ENCODE measurements at regions of chr14 and their contacts with region 1.

Region 1: DNA sequence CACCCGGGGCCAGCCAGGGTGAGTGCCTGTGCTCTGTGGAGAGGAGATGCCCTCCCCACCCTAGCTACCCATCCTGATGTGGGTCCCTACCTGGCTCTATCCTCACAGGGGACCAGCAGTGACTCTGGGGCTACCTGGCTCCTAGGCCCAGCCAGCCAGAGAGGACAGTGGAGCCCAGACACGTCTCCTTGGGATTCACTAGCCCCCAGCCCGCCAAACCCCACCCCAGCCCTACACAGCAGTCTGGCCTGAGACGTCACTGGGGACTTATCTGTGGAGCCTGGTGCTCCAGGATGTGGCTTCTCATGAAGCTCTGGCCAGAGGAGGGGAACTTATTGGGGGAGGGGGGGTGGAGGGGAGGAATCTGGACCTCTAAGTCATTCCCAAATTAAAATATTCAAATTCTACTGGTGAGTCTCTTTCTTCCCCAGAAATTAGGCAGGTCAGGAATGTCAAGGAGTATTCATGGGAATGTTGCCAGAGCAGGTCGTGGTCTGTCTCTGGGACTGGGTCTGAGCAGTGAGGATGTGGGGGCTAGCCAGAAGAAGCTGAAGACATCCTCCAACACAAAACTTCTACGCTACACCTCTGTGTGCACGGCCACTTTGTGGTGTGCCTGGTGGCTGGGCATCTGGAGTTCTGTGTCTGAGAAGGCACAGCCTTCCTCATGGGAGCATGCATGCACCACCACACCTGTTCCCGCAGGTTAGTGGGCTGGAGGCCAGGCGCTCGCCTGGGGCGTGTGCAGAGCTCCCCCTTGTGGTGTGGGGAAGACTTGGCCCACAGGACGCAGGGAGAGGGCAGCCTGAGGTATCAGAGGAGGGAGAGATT is 2.7 kb downstream of the CMTM5 start:
- DNase-seq: peak in 1 of 2 experiments; percentile 81
- H3K4me3 ChIP-seq: no peak overlapping the region
- H3K27ac ChIP-seq: no peak overlapping the region
- H3K4me1 ChIP-seq: peaks cover 0 to 12% (median 4%) of the 10 kb centered on the region in 4 experiments; a peak in 3 of 7 replicates
- H3K27me3 ChIP-seq: peaks cover 0 to 23% (median 11%) of the 10 kb centered on the region in 4 experiments; a peak in 6 of 7 replicates
- CTCF ChIP-seq: peak; percentile 92 to 97 (median 95)
- EP300 ChIP-seq: no peak
- POLR2A ChIP-seq: no peak
- RAD21 ChIP-seq: peak; percentile 95

Region 2: DNA sequence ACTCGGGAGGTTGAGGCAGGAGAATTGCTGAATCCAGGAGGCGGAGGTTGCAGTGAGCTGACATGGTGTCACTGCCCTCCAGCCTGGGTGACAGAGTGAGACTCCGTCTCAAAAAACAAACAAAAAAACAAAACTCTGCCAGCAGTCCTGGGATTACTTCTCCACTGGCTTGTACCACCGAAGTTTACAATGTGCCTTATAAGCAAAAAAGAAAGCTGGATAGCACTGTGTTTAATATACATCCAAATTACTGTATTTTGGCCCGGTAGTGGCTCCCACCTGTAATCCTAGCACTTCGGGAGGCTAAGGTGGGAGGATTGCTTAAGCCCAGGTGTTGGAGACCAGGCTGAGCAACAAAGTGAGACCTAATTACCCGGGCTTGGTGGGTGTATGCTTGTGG is 110.4 kb before region 1 on chr14:
- CTCF ChIA-PET with region 1: interaction called, 12 read pairs
- POLR2A ChIA-PET with region 1: no interaction called
- DNase-seq: no peak
- H3K4me3 ChIP-seq: no peak overlapping the region
- H3K27ac ChIP-seq: no peak overlapping the region
- H3K4me1 ChIP-seq: no peaks in the 10 kb centered on the region
- H3K27me3 ChIP-seq: peaks cover 1 to 21% (median 4%) of the 10 kb centered on the region in 4 experiments; a peak in 4 of 7 replicates
- CTCF ChIP-seq: no peak
- EP300 ChIP-seq: no peak
- POLR2A ChIP-seq: no peak
- RAD21 ChIP-seq: no peak

Region 3: DNA sequence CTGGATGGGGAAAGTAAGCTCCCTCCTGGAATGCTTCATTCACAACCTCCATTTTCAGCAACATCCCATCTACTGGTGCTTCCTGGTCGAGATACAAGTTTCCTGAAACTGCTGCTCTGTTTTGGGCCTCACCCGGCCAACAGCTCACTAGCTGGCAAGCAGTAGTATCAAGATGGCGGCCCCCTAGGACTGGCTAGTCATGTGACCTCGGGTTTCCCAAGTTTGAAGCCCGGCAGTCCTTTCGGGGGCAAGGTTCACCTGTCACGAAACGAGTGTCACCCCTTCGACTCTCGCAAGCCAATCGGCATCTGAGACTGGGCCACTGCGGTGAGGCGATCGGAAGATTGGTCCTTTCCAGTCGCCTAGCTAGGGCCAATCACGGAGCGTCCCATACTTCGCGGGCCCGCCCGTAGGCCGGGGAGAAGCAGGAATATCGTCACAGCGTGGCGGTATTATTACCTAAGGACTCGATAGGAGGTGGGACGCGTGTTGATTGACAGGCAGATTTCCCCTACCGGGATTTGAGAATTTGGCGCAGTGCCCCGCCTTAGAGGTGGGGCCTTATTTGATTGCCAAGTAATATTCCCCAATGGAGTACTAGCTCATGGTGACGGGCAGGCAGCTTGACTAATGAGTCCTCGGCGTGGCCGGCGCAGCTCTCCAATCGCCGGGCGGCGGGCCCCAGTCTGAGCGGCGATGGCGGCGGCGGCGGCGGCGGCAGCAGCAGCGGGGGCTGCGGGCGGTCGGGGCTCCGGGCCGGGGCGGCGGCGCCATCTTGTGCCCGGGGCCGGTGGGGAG is 58.6 kb before region 1 on chr14 and contains the start of gene PABPN1:
- CTCF ChIA-PET with region 1: interaction called, 60 read pairs
- POLR2A ChIA-PET with region 1: interaction called, 19 read pairs
- DNase-seq: peak; percentile 94 to 99
- H3K4me3 ChIP-seq: peak within 1 kb of the TSS; percentile 96 to 100 (median 99)
- H3K27ac ChIP-seq: peak within 1 kb of the TSS; percentile 92
- H3K4me1 ChIP-seq: peaks cover 0 to 6% (median 2%) of the 10 kb centered on the region in 4 experiments; a peak in 6 of 7 replicates
- H3K27me3 ChIP-seq: no peaks in the 10 kb centered on the region
- CTCF ChIP-seq: no peak
- EP300 ChIP-seq: no peak
- POLR2A ChIP-seq: peak; percentile 81 to 94
- RAD21 ChIP-seq: no peak
- total RNA-seq, gene PABPN1: 300 and 312 TPM in 2 replicates

Region 4: DNA sequence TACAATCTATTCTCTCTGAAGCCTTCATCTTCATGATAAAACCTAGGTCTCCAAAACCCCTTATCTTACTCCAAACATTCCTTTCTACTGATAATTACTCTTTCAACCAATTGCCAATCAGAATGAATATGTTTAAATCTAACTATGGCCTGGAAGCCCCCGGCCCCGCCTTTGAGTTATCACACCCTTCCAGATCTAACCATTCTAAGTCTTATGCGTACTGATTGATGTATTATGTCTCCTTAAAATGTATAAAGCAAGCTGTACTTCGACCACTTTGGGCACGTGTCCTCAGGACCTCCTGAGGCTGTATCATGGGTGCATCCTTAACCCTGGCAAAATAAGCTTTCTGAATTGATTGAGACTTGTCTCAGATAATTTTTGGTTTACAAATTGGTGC is 44.0 kb before region 1 on chr14:
- CTCF ChIA-PET with region 1: interaction called, 21 read pairs
- POLR2A ChIA-PET with region 1: no interaction called
- DNase-seq: no peak
- H3K4me3 ChIP-seq: no peak overlapping the region
- H3K27ac ChIP-seq: no peak overlapping the region
- H3K4me1 ChIP-seq: no peaks in the 10 kb centered on the region
- H3K27me3 ChIP-seq: no peaks in the 10 kb centered on the region
- CTCF ChIP-seq: no peak
- EP300 ChIP-seq: no peak
- POLR2A ChIP-seq: no peak
- RAD21 ChIP-seq: no peak

Region 5: GRCh38 chr14:23352511-23353432 is 26.8 kb before region 1 on chr14 and contains the start of gene SLC22A17:
- CTCF ChIA-PET with region 1: interaction called, 333 read pairs
- POLR2A ChIA-PET with region 1: interaction called, 7 read pairs
- DNase-seq: peak in 1 of 2 experiments; percentile 86
- H3K4me3 ChIP-seq: peak within 1 kb of the TSS; percentile 37 to 84 (median 73)
- H3K27ac ChIP-seq: 0 out of 2 replicates have a peak within 1 kb of the TSS, but pooled peaks have one; percentile 8
- H3K4me1 ChIP-seq: peaks cover 0 to 3% (median 2%) of the 10 kb centered on the region in 4 experiments; a peak in 4 of 7 replicates
- H3K27me3 ChIP-seq: peaks cover 0 to 14% (median 10%) of the 10 kb centered on the region in 4 experiments; a peak in 6 of 7 replicates
- CTCF ChIP-seq: peak in 2 of 3 experiments; percentile 11 to 22; a peak in 2 of 4 replicates
- EP300 ChIP-seq: no peak
- POLR2A ChIP-seq: peak; percentile 36 to 91
- RAD21 ChIP-seq: peak in 1 of 2 experiments; percentile 16; a peak in 1 of 4 replicates
- total RNA-seq, gene SLC22A17: 39.4 and 43.0 TPM in 2 replicates

Region 6: DNA sequence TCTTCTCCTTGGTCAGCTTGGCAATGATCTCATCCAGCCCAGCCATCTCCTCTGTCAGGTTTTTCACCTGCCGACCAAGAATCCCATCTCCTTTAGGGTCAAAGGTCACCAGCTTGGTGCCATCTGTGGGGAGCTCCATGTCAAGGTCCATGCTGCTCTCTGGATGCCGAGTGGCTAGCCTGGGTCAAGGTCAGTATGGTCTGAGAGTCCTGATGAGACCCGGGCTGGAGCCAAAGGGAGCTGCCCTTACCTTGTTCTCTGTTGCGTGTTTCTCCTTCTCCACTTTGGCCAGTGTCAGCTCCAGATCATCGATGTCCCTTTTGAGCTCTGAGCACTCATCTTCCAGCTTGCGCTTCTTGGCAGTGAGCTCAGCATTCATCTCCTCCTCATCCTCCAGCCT is 44.1 kb after region 1 on chr14:
- CTCF ChIA-PET with region 1: interaction called, 12 read pairs
- POLR2A ChIA-PET with region 1: no interaction called
- DNase-seq: no peak
- H3K4me3 ChIP-seq: no peak overlapping the region
- H3K27ac ChIP-seq: no peak overlapping the region
- H3K4me1 ChIP-seq: no peaks in the 10 kb centered on the region
- H3K27me3 ChIP-seq: peaks cover 0 to 4% (median under 1%) of the 10 kb centered on the region in 4 experiments; a peak in 2 of 7 replicates
- CTCF ChIP-seq: no peak
- EP300 ChIP-seq: no peak
- POLR2A ChIP-seq: no peak
- RAD21 ChIP-seq: no peak

Region 7: DNA sequence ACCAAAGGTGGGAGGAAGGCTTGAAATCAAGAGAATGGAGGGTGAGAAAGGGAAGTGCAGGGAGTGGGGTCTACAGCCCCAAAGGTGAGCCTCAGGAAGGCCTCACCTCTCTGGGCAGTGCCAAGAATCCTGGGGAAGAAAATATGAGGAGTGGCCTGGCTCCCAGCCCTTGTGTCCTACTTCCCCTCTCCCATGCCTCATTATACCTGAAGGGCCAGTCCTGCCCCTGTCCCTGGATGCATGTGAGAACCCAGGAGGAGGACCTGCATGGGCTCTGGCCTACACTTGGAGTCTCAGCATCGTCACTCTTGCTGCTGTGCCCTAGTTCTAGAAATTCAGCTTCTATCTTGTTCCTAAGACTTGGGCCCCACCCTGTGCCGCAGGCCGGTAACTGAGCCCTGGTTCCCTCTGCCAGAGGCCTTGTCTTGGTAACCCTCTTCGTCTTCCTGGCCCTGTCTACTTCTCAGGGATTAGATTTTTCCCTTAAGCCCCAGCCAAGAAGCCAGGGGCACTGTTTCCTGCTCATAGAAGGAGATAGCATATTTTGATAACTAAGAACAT is 66.8 kb after region 1 on chr14:
- CTCF ChIA-PET with region 1: interaction called, 16 read pairs
- POLR2A ChIA-PET with region 1: no interaction called
- DNase-seq: no peak
- H3K4me3 ChIP-seq: no peak overlapping the region
- H3K27ac ChIP-seq: no peak overlapping the region
- H3K4me1 ChIP-seq: peaks cover 2 to 12% (median 9%) of the 10 kb centered on the region in 4 experiments
- H3K27me3 ChIP-seq: no peaks in the 10 kb centered on the region; a peak in 2 of 7 replicates
- CTCF ChIP-seq: peak in 2 of 3 experiments; percentile 12 to 27; a peak in 2 of 4 replicates
- EP300 ChIP-seq: no peak
- POLR2A ChIP-seq: no peak
- RAD21 ChIP-seq: peak; percentile 38 to 56; a peak in 3 of 4 replicates

Region 8: GRCh38 chr14:23670481-23670880 is 290.9 kb after region 1 on chr14:
- CTCF ChIA-PET with region 1: no interaction called
- POLR2A ChIA-PET with region 1: no interaction called
- DNase-seq: no peak
- H3K4me3 ChIP-seq: no peak overlapping the region
- H3K27ac ChIP-seq: no peak overlapping the region
- H3K4me1 ChIP-seq: no peaks in the 10 kb centered on the region
- H3K27me3 ChIP-seq: no peaks in the 10 kb centered on the region; a peak in 1 of 7 replicates
- CTCF ChIP-seq: no peak
- EP300 ChIP-seq: no peak
- POLR2A ChIP-seq: no peak
- RAD21 ChIP-seq: no peak